ENCODE measurements at regions of chr16 and their contacts with region 1.

Region 1: GRCh38 chr16:31507929-31508705 is at the start of gene RUSF1:
- DNase-seq: peak; percentile 87 to 88
- H3K4me3 ChIP-seq: peak within 1 kb of the TSS; percentile 90
- H3K4me3 Mint-ChIP-seq: peak within 1 kb of the TSS; percentile 92
- H3K27ac Mint-ChIP-seq: peak within 1 kb of the TSS; percentile 95
- H3K4me1 ChIP-seq: no peaks in the 10 kb centered on the region
- H3K4me1 Mint-ChIP-seq: peaks cover 15% of the 10 kb centered on the region
- H3K27me3 ChIP-seq: no peaks in the 10 kb centered on the region
- H3K27me3 Mint-ChIP-seq: no peaks in the 10 kb centered on the region
- CTCF ChIP-seq: no peak
- total RNA-seq, gene RUSF1: 23.5 and 30.5 TPM in 2 replicates

Region 2: DNA sequence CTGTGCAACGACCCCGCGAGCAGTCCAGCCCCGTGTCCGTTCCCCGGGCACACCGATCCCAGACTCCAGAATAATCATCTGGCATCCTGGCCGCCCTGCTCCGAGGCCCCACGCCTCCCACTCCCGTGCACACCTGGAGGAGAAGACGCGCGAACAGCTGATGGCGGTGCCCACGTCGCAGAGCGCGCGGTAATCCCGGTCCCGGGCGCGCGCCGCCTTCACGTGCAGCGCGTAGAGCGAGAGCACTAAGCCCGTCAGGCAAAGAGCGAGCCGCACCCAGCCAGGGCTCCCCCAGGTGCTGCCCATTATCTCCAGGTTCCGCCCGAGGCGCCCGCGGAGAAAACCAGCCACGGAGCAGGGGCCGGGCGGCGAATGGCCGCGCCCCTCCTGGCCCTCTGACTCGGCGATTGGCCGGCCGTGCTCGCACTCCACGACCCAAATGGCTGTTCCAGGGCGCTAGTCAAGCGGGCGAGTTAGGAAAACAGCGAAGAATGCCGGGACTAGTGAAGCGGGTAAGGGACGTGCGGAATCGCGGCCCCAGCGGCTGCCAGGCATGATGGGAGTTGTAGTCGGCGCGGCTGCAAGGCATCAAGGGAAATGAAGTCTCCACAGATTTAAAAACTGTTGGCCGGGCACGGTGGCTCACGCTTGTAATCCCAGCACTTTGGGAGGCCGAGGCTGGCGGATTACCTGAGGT is 413.5 kb before region 1 on chr16 and contains the start of gene VKORC1:
- CTCF ChIA-PET with region 1: no interaction called
- POLR2A ChIA-PET with region 1: no interaction called
- intact Hi-C with region 1: no loop called
- DNase-seq: peak; percentile 96 to 97
- H3K4me3 ChIP-seq: peak within 1 kb of the TSS; percentile 97
- H3K4me3 Mint-ChIP-seq: peak within 1 kb of the TSS; percentile 98
- H3K27ac Mint-ChIP-seq: peak within 1 kb of the TSS; percentile 92
- H3K4me1 ChIP-seq: no peaks in the 10 kb centered on the region
- H3K4me1 Mint-ChIP-seq: peaks cover 15% of the 10 kb centered on the region
- H3K27me3 ChIP-seq: no peaks in the 10 kb centered on the region
- H3K27me3 Mint-ChIP-seq: no peaks in the 10 kb centered on the region
- CTCF ChIP-seq: no peak
- total RNA-seq, gene VKORC1: 61.3 and 61.4 TPM in 2 replicates

Region 3: DNA sequence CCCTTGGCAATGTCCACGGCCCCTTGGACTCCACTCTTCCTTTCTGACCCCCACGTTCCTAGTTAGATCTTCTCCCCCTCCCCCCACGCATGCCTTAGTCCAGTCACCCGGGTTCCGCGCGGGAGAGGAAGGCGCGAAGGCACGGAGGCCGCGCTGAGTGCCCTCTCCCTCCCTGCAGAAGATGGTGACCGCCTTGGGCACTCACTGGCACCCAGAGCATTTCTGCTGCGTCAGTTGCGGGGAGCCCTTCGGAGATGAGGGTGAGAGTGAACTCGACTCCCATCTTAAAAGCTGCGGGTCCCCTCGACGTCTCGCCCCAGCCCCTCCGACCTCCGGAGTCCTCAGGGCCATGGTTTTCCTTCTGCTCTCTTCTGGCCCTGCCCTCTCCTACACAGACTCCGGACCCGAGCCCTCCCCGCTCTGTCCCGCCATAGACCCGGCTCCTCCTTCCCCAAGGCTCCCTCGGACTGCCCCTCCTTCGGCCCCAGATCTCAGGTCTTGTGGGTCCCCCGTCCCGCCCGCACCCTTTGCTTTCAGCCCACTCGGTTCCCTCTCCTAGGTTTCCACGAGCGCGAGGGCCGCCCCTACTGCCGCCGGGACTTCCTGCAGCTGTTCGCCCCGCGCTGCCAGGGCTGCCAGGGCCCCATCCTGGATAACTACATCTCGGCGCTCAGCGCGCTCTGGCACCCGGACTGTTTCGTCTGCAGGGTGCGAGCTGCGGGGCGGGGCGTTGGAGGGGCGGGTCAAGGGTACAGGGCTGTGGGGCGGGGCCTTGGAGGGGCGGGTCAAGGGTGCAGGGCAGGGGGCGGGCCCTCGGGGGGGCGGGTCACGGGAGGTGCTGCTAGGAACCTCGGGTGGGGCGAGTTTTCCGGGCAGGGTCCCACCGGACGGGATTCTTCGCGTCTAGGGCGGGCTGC is 31.6 kb before region 1 on chr16:
- CTCF ChIA-PET with region 1: interaction called, 5 read pairs
- POLR2A ChIA-PET with region 1: no interaction called
- intact Hi-C with region 1: loop called (anchors 2 kb)
- DNase-seq: peak; percentile 79 to 87
- H3K4me3 ChIP-seq: peak overlapping the region; percentile 81
- H3K4me3 Mint-ChIP-seq: peak overlapping the region; percentile 86
- H3K27ac Mint-ChIP-seq: peak overlapping the region; percentile 86
- H3K4me1 ChIP-seq: peaks cover 3% of the 10 kb centered on the region
- H3K4me1 Mint-ChIP-seq: peaks cover 18% of the 10 kb centered on the region
- H3K27me3 ChIP-seq: no peaks in the 10 kb centered on the region
- H3K27me3 Mint-ChIP-seq: no peaks in the 10 kb centered on the region
- CTCF ChIP-seq: no peak

Measured in Caco-2 (cell line).